Activated CD4-positive, alpha-beta memory T cell treated with anti-CD3 and anti-CD28 coated beads for 36 hours (primary cell): ENCODE measurements at regions of chr2 and their contacts with region 1.

Region 1: DNA sequence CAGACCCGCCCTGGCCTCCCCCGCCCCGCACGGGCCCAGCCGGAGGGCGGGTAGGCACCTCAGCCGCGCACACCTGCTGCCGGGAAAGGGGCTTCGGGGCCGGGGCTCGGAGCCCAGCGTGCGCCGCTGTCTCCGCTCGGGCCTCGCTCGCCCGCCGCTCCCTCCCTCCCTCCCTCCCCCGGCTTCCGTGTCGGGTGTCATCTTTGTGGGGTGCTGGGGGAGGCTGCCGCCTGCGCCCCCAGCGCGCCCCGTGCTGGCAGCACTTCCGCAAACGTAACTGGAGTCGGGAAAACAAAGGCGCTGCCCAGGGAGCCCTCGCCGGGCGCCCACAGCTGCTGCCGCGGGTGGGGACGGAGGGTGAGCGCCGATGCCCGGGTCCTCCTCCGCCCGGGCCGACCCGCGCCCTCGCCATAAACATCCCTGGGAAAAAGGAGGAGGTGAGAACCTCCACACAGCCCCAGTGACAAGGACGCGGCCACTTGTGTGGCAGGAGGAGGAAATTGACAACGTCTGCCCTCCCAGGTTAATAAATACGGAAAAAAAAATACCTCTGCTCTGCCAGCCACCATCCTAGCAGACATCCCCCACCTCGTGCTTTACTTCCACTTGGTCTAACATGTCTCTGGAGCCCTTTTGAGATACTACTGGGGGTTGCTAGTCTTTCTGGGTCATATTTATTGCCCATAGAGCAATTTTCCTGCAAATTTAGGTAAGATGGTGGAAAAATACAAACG is 550 bp downstream of the MFSD6 start:
- DNase-seq: peak; percentile 80
- H3K4me3 Mint-ChIP-seq: peak overlapping the region; percentile 82
- H3K27ac Mint-ChIP-seq: peak overlapping the region; percentile 88
- H3K4me1 Mint-ChIP-seq: peaks cover 40% of the 10 kb centered on the region
- H3K27me3 Mint-ChIP-seq: no peaks in the 10 kb centered on the region

Region 2: GRCh38 chr2:190319555-190320498 is 88.9 kb before region 1 on chr2 and contains the start of gene HIBCH:
- CTCF ChIA-PET with region 1: no interaction called
- POLR2A ChIA-PET with region 1: no interaction called
- intact Hi-C with region 1: loop called (anchors 1 kb)
- DNase-seq: peak; percentile 96
- H3K4me3 Mint-ChIP-seq: peak within 1 kb of the TSS; percentile 87
- H3K27ac Mint-ChIP-seq: peak within 1 kb of the TSS; percentile 94
- H3K4me1 Mint-ChIP-seq: peaks cover 52% of the 10 kb centered on the region
- H3K27me3 Mint-ChIP-seq: no peaks in the 10 kb centered on the region
- total RNA-seq, gene HIBCH: 33.9 to 37.8 TPM

Region 3: DNA sequence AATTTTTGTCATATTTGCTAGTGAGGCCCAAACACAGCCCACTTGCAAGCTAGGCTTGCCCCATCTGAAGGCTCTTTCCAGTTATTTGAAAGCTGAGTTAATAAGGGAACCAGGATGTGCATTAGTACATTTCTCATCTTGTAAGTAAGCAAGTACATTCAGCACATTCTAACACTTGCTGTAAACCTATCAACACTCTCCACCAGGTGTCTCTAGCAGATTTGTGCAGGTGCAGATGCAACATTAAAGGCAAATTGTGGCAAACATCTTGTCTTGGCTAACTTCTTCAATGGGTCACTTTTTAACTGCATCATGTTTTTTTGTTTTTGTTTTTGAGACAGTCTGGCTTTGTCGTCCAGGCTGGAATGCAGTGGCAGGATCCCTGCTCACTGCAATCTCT is 25.9 kb before region 1 on chr2:
- CTCF ChIA-PET with region 1: no interaction called
- POLR2A ChIA-PET with region 1: no interaction called
- intact Hi-C with region 1: loop called (anchors 2 kb)
- DNase-seq: no peak
- H3K4me3 Mint-ChIP-seq: no peak overlapping the region
- H3K27ac Mint-ChIP-seq: no peak overlapping the region
- H3K4me1 Mint-ChIP-seq: peaks cover 4% of the 10 kb centered on the region
- H3K27me3 Mint-ChIP-seq: no peaks in the 10 kb centered on the region

Region 4: DNA sequence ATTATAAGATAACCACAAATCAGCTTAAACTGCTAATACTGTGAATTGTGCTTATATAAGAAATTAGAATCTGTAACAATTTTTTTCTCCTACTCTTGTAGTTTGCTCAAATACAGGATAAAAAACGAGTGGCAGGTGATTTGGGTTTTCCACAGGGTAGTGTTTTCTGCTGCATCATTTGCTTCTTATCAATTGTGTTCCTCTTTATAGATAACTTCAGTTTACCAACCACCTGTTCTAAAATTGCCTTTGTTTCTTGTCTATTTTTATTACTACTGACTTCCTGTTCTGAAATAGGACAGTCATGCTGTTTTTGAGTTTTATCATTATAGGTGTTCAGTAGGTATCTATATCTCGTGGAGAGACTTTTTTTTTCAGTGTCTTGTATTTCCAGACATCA is 56.4 kb after region 1 on chr2:
- CTCF ChIA-PET with region 1: no interaction called
- POLR2A ChIA-PET with region 1: no interaction called
- intact Hi-C with region 1: no loop called
- DNase-seq: no peak
- H3K4me3 Mint-ChIP-seq: no peak overlapping the region
- H3K27ac Mint-ChIP-seq: no peak overlapping the region
- H3K4me1 Mint-ChIP-seq: peaks cover 49% of the 10 kb centered on the region
- H3K27me3 Mint-ChIP-seq: no peaks in the 10 kb centered on the region

Region 5: GRCh38 chr2:190534310-190535120 is 125.8 kb after region 1 on chr2 and contains the start of gene NEMP2:
- CTCF ChIA-PET with region 1: no interaction called
- POLR2A ChIA-PET with region 1: interaction called, 6 read pairs
- intact Hi-C with region 1: loop called (anchors 1 kb)
- DNase-seq: peak; percentile 86
- H3K4me3 Mint-ChIP-seq: peak within 1 kb of the TSS; percentile 95
- H3K27ac Mint-ChIP-seq: peak within 1 kb of the TSS; percentile 99
- H3K4me1 Mint-ChIP-seq: peaks cover 57% of the 10 kb centered on the region
- H3K27me3 Mint-ChIP-seq: no peaks in the 10 kb centered on the region
- total RNA-seq, gene NEMP2: 28.8 to 30.0 TPM

Region 6: DNA sequence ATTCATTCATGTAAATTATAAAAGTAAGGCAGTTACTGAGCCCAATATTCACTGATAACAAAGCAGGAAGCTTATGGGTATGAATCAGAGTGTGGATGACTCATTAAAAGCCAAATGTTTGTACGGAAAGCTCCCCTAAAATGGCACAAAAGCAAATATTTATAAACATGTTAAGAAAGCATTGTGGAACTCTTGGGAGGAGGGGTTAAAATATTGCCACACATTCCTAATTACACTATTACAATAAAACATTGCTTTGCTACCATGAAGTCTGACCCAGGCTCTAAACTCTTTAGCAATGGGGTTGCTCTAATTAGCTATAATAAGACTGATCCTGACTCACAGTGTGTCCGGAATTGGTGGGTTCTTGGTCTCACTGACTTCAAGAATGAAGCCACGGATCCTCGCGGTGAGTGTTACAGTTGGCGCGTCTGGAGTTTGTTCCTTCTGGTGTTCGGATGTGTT is 351.1 kb after region 1 on chr2:
- CTCF ChIA-PET with region 1: no interaction called
- POLR2A ChIA-PET with region 1: no interaction called
- intact Hi-C with region 1: loop called (anchors 10 kb)
- DNase-seq: no peak
- H3K4me3 Mint-ChIP-seq: peak overlapping the region; percentile 51
- H3K27ac Mint-ChIP-seq: peak overlapping the region; percentile 18
- H3K4me1 Mint-ChIP-seq: peaks cover 32% of the 10 kb centered on the region
- H3K27me3 Mint-ChIP-seq: no peaks in the 10 kb centered on the region